Ascending aorta (tissue), 2 donors: ENCODE measurements at regions of chr1 and their contacts with region 1.

Region 1: GRCh38 chr1:7042322-7043190 is 257.3 kb downstream of the CAMTA1 start:
- DNase-seq: no peak
- H3K4me3 ChIP-seq: no peak overlapping the region
- H3K27ac ChIP-seq: no peak overlapping the region
- H3K4me1 ChIP-seq: no peaks in the 10 kb centered on the region
- H3K27me3 ChIP-seq: no peaks in the 10 kb centered on the region
- CTCF ChIP-seq: peak; percentile 6 to 46 (median 24)

Region 2: GRCh38 chr1:7646981-7647901 is 604.7 kb after region 1 on chr1:
- intact Hi-C with region 1: loop called (anchors 5 kb)
- DNase-seq: peak in 1 of 2 donors; percentile 75
- H3K4me3 ChIP-seq: no peak overlapping the region
- H3K27ac ChIP-seq: no peak overlapping the region
- H3K4me1 ChIP-seq: no peaks in the 10 kb centered on the region
- H3K27me3 ChIP-seq: no peaks in the 10 kb centered on the region
- CTCF ChIP-seq: peak; percentile 82 to 96 (median 93)